Esophagus muscularis mucosa (tissue), 4 donors: ENCODE measurements at regions of chr1 and their contacts with region 1.

Region 1: DNA sequence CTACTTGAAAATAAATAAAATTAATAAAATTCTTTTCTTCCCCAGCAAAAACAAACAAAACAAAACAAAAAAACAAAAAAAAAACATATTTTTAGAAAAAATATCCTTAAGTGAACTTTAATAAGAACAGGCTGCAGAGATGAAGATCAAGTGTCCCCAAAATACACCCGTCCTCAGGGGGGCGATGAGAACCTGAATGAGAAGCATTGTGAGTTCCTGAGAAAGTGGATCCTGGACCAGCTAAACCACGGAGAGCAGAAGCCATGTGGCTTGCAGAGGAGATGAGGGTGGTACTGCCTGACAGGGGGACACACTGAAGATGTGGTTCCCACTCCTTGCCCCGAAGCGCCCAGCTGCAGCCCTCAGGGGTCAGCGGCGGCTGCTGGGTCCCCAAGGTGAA is 89.3 kb downstream of the ITPKB start:
- DNase-seq: no peak
- H3K4me3 ChIP-seq: no peak overlapping the region
- H3K27ac ChIP-seq: no peak overlapping the region
- H3K4me1 ChIP-seq: peaks cover 28 to 34% (median 31%) of the 10 kb centered on the region in 4 donors
- H3K27me3 ChIP-seq: no peaks in the 10 kb centered on the region
- CTCF ChIP-seq: peak in 2 of 3 experiments; percentile 38 to 48
- EP300 ChIP-seq: no peak
- POLR2A ChIP-seq: no peak

Region 2: DNA sequence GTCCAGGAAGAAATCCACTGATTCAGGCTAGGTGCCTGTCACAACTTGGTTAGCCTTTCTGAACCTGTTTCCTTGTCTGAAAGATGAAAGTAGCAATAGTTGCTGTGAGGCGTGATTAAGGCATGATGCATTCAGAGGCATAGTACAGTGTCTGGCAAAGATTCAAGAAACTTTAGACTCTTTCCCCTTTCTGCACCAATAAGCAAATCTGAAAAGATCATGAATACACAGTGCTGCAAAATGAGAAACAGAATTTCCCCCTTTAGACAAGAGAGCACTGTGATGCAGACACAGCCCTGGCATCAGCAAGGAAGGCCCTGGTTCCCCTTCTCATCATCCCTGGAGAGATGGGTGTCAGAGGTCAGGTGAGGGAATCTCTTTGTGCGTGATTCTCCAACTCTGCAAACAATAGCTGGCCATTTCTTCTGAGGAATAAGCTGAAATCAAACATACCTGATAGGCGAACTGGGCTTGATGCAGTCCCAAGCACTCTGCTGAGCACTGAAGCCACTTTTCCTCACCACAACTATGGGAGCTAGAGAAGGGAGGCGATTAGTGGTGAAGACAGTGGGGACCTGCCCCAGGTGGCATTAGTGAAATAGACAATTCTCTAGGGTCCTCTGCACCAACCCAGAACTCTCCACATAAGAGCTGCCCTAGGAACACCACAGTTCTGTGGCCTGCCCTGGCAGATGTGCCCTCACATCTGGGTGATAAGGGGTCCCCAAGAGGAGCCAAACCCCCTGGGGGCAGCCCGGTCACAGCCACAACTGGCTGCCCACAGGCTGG is 47.6 kb after region 1 on chr1:
- intact Hi-C with region 1: loop called (anchors 5 kb)
- DNase-seq: no peak
- H3K4me3 ChIP-seq: no peak overlapping the region
- H3K27ac ChIP-seq: peak overlapping the region in 1 of 4 donors; percentile 100
- H3K4me1 ChIP-seq: peaks cover 0 to 77% (median 38%) of the 10 kb centered on the region in 4 donors
- H3K27me3 ChIP-seq: no peaks in the 10 kb centered on the region
- CTCF ChIP-seq: no peak
- EP300 ChIP-seq: no peak
- POLR2A ChIP-seq: no peak